Activated B cell treated with CpG ODN at 0.5 μM for 24 hours (primary cell): ENCODE measurements at regions of chr7 and their contacts with region 1.

Region 1: DNA sequence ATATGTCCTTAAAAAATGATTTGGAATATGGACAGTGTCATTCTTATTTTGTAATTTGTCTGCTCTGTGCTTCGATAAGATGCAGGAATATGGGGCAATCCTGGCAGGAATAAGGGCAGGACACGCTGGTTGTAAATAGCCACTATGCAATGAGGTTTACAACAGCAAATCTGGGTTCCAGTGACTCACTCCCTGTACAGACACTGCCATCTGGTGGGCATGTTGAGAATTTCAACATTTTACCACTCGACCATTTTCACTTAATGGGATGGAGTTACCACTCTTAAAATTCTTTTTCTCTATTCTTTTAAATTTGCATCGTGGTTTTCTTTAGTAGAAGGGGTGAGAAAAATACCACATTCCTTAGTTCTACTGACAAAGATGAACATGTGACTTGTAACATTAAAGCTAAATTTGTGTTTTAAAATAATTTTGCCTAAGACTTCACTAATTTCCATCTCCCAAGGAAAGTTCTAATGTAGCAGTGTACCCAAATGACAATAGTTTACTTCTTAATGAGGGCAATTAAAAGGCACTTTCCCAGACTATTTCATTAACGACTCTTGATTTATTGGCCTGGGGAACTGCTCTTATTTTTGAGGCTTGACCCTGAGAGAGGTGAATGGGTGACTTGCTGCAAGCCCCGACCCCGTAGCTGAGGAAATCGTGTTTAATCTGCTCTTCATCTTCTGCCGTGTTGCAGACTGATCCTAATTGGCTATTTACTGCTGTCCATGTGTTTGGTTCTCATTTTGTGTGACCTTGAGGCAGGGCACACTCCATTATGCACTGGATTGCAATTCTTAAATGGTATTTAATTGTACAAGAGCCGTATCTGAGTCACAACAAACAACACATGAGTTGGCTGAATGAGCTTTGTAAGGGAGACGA is 173.6 kb upstream of the IMMP2L start:
- DNase-seq: no peak
- ATAC-seq: peak; percentile 34
- H3K4me3 Mint-ChIP-seq: no peak overlapping the region
- H3K27ac Mint-ChIP-seq: no peak overlapping the region
- H3K4me1 Mint-ChIP-seq: no peaks in the 10 kb centered on the region
- H3K27me3 Mint-ChIP-seq: peaks cover 2% of the 10 kb centered on the region
- CTCF ChIP-seq: peak; percentile 89

Region 2: GRCh38 chr7:110090110-110090769 is 1645.7 kb before region 1 on chr7:
- CTCF ChIA-PET with region 1: no interaction called
- POLR2A ChIA-PET with region 1: no interaction called
- intact Hi-C with region 1: loop called (anchors 10 kb)
- DNase-seq: no peak
- ATAC-seq: no peak
- H3K4me3 Mint-ChIP-seq: no peak overlapping the region
- H3K27ac Mint-ChIP-seq: no peak overlapping the region
- H3K4me1 Mint-ChIP-seq: no peaks in the 10 kb centered on the region
- H3K27me3 Mint-ChIP-seq: no peaks in the 10 kb centered on the region
- CTCF ChIP-seq: no peak

Region 3: GRCh38 chr7:111089822-111090426 is 646.0 kb before region 1 on chr7:
- CTCF ChIA-PET with region 1: no interaction called
- POLR2A ChIA-PET with region 1: no interaction called
- intact Hi-C with region 1: loop called (anchors 1 kb)
- DNase-seq: no peak
- ATAC-seq: peak; percentile 55
- H3K4me3 Mint-ChIP-seq: no peak overlapping the region
- H3K27ac Mint-ChIP-seq: no peak overlapping the region
- H3K4me1 Mint-ChIP-seq: peaks cover 12% of the 10 kb centered on the region
- H3K27me3 Mint-ChIP-seq: no peaks in the 10 kb centered on the region
- CTCF ChIP-seq: peak; percentile 77

Region 4: DNA sequence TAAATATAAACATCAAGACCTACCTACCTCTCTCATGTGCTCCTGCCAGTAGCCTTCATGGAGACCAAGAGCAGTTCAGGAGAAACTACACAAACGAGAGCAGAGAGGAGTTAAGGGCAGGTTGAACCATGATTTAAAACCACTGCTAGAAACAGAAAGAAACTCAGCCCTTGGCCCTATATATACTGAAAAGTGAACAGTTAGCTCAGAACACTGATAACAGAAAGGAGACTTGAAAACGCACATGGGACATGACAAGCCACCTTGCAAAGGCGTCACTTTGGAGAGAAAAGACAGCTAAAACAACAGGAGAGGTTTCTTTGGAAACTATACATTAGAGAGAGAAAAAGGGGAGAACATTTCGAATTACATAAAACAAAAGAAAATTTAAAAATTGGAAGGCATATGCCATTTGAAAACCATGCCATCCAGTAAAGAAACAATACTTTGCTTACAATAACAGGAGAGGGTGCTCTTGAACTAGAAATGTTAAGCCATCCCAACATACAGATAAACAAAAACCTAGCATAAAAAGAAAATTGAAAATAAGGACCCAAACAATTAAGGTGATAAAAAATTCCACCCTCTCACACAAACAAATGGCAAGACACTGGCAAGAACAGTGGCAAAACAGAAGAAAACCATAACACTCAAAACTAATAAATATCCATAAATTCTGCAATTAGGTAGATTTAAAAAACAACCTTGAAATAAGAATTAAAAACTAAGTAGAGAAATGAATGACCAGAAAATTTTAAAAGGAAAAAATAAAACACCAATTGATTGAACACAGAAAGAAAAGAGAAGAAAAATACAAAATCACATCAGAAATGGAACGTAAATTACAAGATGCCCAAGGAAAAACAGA is 406.3 kb before region 1 on chr7:
- CTCF ChIA-PET with region 1: interaction called, 3 read pairs
- POLR2A ChIA-PET with region 1: no interaction called
- intact Hi-C with region 1: loop called (anchors 5 kb)
- DNase-seq: no peak
- ATAC-seq: no peak
- H3K4me3 Mint-ChIP-seq: no peak overlapping the region
- H3K27ac Mint-ChIP-seq: no peak overlapping the region
- H3K4me1 Mint-ChIP-seq: peaks cover 18% of the 10 kb centered on the region
- H3K27me3 Mint-ChIP-seq: no peaks in the 10 kb centered on the region
- CTCF ChIP-seq: no peak

Region 5: GRCh38 chr7:111747718-111748117 is 11.8 kb after region 1 on chr7:
- CTCF ChIA-PET with region 1: no interaction called
- POLR2A ChIA-PET with region 1: no interaction called
- intact Hi-C with region 1: no loop called
- DNase-seq: no peak
- ATAC-seq: no peak
- H3K4me3 Mint-ChIP-seq: no peak overlapping the region
- H3K27ac Mint-ChIP-seq: no peak overlapping the region
- H3K4me1 Mint-ChIP-seq: no peaks in the 10 kb centered on the region
- H3K27me3 Mint-ChIP-seq: peaks cover 3% of the 10 kb centered on the region
- CTCF ChIP-seq: no peak

Region 6: DNA sequence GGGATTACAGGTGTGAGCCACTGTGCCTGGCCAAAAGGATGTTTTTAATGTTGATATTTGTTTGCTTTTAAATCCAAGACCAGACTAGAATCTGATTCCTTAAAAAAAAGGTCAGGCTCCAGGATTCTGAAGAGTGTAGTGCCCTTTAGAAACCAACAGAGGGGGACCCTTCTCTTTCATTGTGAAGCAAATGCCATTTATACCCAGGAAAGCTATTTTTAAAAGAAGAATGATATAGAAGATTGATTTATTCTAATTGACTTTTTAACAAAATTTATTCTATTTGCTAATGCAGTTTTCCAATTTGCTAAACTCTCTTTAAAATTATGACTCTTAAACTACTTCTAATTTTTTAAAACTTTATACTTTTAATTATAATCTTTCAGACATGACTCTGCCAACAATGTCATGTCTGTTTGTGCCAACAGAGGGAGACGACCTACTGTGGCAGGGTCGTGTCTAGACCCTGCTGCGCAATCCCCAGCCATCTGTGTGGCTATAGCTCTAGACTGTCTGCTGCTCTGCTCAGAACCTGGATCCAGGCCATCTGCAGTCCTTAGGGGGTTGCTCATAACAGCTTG is 27.4 kb after region 1 on chr7:
- CTCF ChIA-PET with region 1: no interaction called
- POLR2A ChIA-PET with region 1: no interaction called
- intact Hi-C with region 1: no loop called
- DNase-seq: no peak
- ATAC-seq: no peak
- H3K4me3 Mint-ChIP-seq: no peak overlapping the region
- H3K27ac Mint-ChIP-seq: no peak overlapping the region
- H3K4me1 Mint-ChIP-seq: no peaks in the 10 kb centered on the region
- H3K27me3 Mint-ChIP-seq: no peaks in the 10 kb centered on the region
- CTCF ChIP-seq: no peak